Caco-2 (cell line): ENCODE measurements at regions of chr1 and their contacts with region 1.

Region 1: GRCh38 chr1:167268398-167268787 is 47.7 kb downstream of the POU2F1 start:
- DNase-seq: no peak
- H3K4me3 ChIP-seq: no peak overlapping the region
- H3K4me3 Mint-ChIP-seq: no peak overlapping the region
- H3K27ac Mint-ChIP-seq: no peak overlapping the region
- H3K4me1 ChIP-seq: no peaks in the 10 kb centered on the region
- H3K4me1 Mint-ChIP-seq: peaks cover 7% of the 10 kb centered on the region
- H3K27me3 ChIP-seq: no peaks in the 10 kb centered on the region
- H3K27me3 Mint-ChIP-seq: no peaks in the 10 kb centered on the region
- CTCF ChIP-seq: no peak

Region 2: DNA sequence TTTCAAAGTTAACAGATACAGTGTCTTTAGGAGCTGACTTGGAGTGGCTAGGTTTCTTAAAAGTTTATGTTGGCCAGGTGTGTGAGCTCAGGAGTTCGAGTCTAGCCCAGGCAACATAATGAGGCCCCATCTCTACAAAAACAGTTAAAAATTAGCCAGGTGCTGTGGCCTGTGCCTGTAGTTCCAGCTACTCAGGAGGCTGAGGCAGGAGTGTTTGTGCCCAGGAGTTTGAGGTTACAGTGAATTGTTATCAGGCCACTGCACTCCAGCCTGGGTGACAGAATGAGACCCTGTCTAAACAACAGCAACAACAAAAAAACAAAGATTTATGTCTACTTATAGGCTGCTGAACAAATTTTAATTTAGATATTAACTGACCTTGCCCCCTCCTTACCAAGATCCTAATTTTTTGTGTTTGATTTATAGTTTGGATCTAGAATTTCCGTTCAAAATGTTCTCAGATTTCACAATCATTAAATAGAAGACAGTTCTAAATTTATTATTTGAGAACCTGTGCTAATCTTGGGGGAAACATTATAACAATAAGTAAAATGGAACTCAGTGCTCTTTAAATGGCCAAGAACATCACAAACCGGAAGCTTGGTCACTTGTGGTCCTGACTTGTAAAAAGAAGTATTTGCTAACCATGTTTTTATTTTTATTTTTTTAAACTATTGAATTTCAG is 20.1 kb after region 1 on chr1:
- CTCF ChIA-PET with region 1: interaction called, 3 read pairs
- POLR2A ChIA-PET with region 1: no interaction called
- intact Hi-C with region 1: loop called (anchors 2 kb)
- DNase-seq: no peak
- H3K4me3 ChIP-seq: no peak overlapping the region
- H3K4me3 Mint-ChIP-seq: no peak overlapping the region
- H3K27ac Mint-ChIP-seq: peak overlapping the region; percentile 55
- H3K4me1 ChIP-seq: peaks cover 4% of the 10 kb centered on the region; the same call in 1 of the 2 replicates
- H3K4me1 Mint-ChIP-seq: peaks cover under 1% of the 10 kb centered on the region
- H3K27me3 ChIP-seq: no peaks in the 10 kb centered on the region
- H3K27me3 Mint-ChIP-seq: no peaks in the 10 kb centered on the region
- CTCF ChIP-seq: no peak

Region 3: GRCh38 chr1:167342846-167343245 is 74.5 kb after region 1 on chr1:
- CTCF ChIA-PET with region 1: interaction called, 31 read pairs
- POLR2A ChIA-PET with region 1: no interaction called
- intact Hi-C with region 1: loop called (anchors 1 kb)
- DNase-seq: no peak
- H3K4me3 ChIP-seq: no peak overlapping the region
- H3K4me3 Mint-ChIP-seq: no peak overlapping the region
- H3K27ac Mint-ChIP-seq: no peak overlapping the region
- H3K4me1 ChIP-seq: no peaks in the 10 kb centered on the region
- H3K4me1 Mint-ChIP-seq: peaks cover 12% of the 10 kb centered on the region
- H3K27me3 ChIP-seq: no peaks in the 10 kb centered on the region
- H3K27me3 Mint-ChIP-seq: no peaks in the 10 kb centered on the region
- CTCF ChIP-seq: peak; percentile 23 to 37

Region 4: GRCh38 chr1:167409183-167409582 is 140.8 kb after region 1 on chr1:
- CTCF ChIA-PET with region 1: interaction called, 6 read pairs
- POLR2A ChIA-PET with region 1: no interaction called
- intact Hi-C with region 1: loop called (anchors 2 kb)
- DNase-seq: peak in 1 of 2 experiments; percentile 35
- H3K4me3 ChIP-seq: no peak overlapping the region
- H3K4me3 Mint-ChIP-seq: no peak overlapping the region
- H3K27ac Mint-ChIP-seq: no peak overlapping the region
- H3K4me1 ChIP-seq: no peaks in the 10 kb centered on the region
- H3K4me1 Mint-ChIP-seq: no peaks in the 10 kb centered on the region
- H3K27me3 ChIP-seq: no peaks in the 10 kb centered on the region
- H3K27me3 Mint-ChIP-seq: no peaks in the 10 kb centered on the region
- CTCF ChIP-seq: peak in 1 of 2 experiments; percentile 29

Region 5: DNA sequence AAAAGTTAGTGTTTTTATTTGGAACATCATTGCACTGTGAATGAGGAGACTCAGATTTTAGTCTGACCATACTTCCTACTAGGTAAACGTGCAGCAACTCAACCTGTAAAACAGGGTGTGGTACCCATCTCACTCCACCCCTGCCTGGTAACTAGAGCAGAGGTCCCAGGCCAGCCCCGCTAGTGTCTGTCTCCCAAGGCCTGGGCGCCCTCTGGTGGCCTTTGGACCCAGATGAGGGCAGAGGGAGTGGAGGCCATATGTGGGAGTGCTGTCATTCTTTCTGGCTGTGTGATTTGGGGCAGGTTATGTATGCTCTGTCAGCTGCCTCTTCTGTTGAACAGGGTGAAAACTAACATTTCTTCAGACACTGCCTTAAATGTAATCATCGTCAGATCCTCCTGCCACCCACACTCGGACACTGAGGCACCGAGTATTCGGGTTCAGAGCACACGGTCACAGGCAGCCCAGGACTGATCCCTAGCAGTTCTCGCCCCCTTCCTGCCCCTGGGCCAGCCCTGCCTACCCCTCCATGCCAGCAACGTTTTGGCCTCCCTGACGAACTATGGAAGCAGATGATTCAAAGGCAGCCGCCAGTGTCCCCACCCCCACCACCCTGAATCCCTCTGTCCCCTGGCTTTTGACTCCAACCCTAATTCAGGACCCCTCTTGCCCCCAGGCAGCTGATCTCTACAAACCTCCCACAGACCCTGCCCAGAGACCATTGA is 173.9 kb after region 1 on chr1:
- CTCF ChIA-PET with region 1: no interaction called
- POLR2A ChIA-PET with region 1: no interaction called
- intact Hi-C with region 1: loop called (anchors 1 kb)
- DNase-seq: peak; percentile 92 to 93
- H3K4me3 ChIP-seq: no peak overlapping the region
- H3K4me3 Mint-ChIP-seq: no peak overlapping the region
- H3K27ac Mint-ChIP-seq: no peak overlapping the region
- H3K4me1 ChIP-seq: no peaks in the 10 kb centered on the region
- H3K4me1 Mint-ChIP-seq: no peaks in the 10 kb centered on the region
- H3K27me3 ChIP-seq: no peaks in the 10 kb centered on the region
- H3K27me3 Mint-ChIP-seq: no peaks in the 10 kb centered on the region
- CTCF ChIP-seq: peak; percentile 90 to 94